T-cell (primary cell): ENCODE measurements at regions of chr5 and their contacts with region 1.

Region 1: GRCh38 chr5:115594128-115595047 is 7.9 kb downstream of the TICAM2 start:
- DNase-seq: no peak
- ATAC-seq: no peak
- H3K4me3 ChIP-seq: no peak overlapping the region
- H3K4me3 Mint-ChIP-seq: no peak overlapping the region
- H3K27ac ChIP-seq: no peak overlapping the region
- H3K27ac Mint-ChIP-seq: no peak overlapping the region
- H3K4me1 ChIP-seq: no peaks in the 10 kb centered on the region
- H3K4me1 Mint-ChIP-seq: peaks cover 0 to 2% (median under 1%) of the 10 kb centered on the region in 3 donors
- H3K27me3 ChIP-seq: no peaks in the 10 kb centered on the region
- H3K27me3 Mint-ChIP-seq: no peaks in the 10 kb centered on the region

Region 2: DNA sequence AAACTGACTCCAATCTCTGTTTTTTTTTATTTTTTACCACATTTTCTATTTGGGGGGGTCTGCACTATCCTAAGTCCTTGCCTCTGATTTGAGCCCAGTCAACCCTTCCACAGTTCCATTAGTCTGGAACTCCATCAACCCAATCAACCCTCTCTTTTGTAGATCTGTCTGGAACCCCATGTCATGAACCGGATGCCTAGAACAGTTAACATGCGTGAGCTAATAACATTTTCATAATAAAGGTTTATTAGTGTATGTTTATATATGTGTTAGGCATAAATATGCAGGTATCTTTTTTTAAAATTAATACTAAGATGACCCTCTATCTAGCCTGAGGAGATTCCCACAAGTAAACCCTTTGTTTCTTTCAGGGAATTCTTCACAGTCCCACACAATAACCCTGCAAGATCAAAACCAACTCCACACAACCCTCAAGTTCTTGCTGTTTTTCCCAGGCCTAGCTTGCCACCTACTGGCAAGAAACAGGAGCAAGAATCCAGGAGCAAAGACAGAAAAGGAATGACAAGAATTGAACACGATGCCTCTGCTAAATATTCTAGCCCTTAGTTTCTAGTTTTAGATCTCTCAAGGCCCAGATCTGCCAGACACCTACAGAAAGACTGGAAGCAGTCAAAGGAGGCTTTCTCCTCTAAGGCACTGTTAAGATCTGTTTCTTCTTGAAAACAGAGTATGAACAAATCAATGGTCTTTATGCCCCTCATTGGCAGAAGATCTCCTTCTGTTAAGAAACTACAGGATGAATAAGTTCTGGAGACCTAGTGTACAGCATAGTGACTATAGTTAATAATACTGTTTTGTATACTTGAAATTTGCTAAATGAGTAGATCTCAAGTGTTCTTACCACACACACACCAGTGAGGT is 525.1 kb before region 1 on chr5:
- CTCF ChIA-PET with region 1: no interaction called
- POLR2A ChIA-PET with region 1: no interaction called
- DNase-seq: peak in 1 of 35 experiments; percentile 14
- ATAC-seq: no peak
- H3K4me3 ChIP-seq: no peak overlapping the region
- H3K4me3 Mint-ChIP-seq: peak overlapping the region in 1 of 3 donors; percentile 2
- H3K27ac ChIP-seq: no peak overlapping the region
- H3K27ac Mint-ChIP-seq: no peak overlapping the region
- H3K4me1 ChIP-seq: peaks cover 0 to 4% of the 10 kb centered on the region in 2 experiments
- H3K4me1 Mint-ChIP-seq: peaks cover 5 to 17% (median 14%) of the 10 kb centered on the region in 3 donors
- H3K27me3 ChIP-seq: peaks cover 0 to 2% of the 10 kb centered on the region in 2 experiments
- H3K27me3 Mint-ChIP-seq: peaks cover 17 to 34% of the 10 kb centered on the region in 2 donors

Region 3: DNA sequence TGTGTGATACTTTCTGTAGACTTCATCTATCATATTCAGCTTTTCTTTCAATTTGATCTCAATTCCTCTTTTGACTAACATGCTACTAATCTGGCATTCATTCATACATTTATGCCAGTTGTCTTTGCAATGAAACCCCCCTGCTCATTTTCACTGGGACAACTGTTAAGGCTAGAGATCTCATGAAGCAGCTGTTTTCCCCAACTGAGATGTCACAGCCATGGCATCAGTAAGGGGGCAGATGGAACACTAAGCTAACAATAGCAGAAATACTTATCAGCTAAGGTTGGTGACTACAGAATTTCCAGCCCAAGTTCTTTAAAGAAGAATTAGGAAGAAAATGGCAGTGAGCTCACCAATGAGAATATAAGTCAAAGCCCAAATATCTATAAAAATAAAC is 22.1 kb after region 1 on chr5:
- CTCF ChIA-PET with region 1: interaction called in 1 of 2 experiments, 4 read pairs
- POLR2A ChIA-PET with region 1: interaction called in 1 of 2 experiments, 13 read pairs
- DNase-seq: no peak
- ATAC-seq: no peak
- H3K4me3 ChIP-seq: no peak overlapping the region
- H3K4me3 Mint-ChIP-seq: no peak overlapping the region
- H3K27ac ChIP-seq: no peak overlapping the region
- H3K27ac Mint-ChIP-seq: no peak overlapping the region
- H3K4me1 ChIP-seq: peaks cover 0 to 2% of the 10 kb centered on the region in 2 experiments
- H3K4me1 Mint-ChIP-seq: peaks cover 5 to 30% (median 20%) of the 10 kb centered on the region in 3 donors
- H3K27me3 ChIP-seq: no peaks in the 10 kb centered on the region
- H3K27me3 Mint-ChIP-seq: no peaks in the 10 kb centered on the region

Region 4: GRCh38 chr5:115774684-115775083 is 180.3 kb after region 1 on chr5:
- CTCF ChIA-PET with region 1: no interaction called
- POLR2A ChIA-PET with region 1: no interaction called
- DNase-seq: no peak
- ATAC-seq: no peak
- H3K4me3 ChIP-seq: no peak overlapping the region
- H3K4me3 Mint-ChIP-seq: no peak overlapping the region
- H3K27ac ChIP-seq: no peak overlapping the region
- H3K27ac Mint-ChIP-seq: no peak overlapping the region
- H3K4me1 ChIP-seq: no peaks in the 10 kb centered on the region
- H3K4me1 Mint-ChIP-seq: no peaks in the 10 kb centered on the region
- H3K27me3 ChIP-seq: peaks cover 0 to 3% of the 10 kb centered on the region in 2 experiments
- H3K27me3 Mint-ChIP-seq: peaks cover 2 to 9% of the 10 kb centered on the region in 2 donors